Right lobe of liver (tissue), 6 donors: ENCODE measurements at regions of chr9 and their contacts with region 1.

Region 1: GRCh38 chr9:126500684-126501382 is 112.9 kb upstream of the LMX1B start:
- DNase-seq: peak in 2 of 3 donors; percentile 70 to 75
- ATAC-seq: peak; percentile 56 to 70 (median 68)
- H3K4me3 ChIP-seq: no peak overlapping the region
- H3K27ac ChIP-seq: no peak overlapping the region
- H3K4me1 ChIP-seq: peaks cover 0 to 4% (median 0%) of the 10 kb centered on the region in 4 donors
- H3K27me3 ChIP-seq: no peaks in the 10 kb centered on the region
- CTCF ChIP-seq: peak; percentile 81 to 92 (median 89)
- POLR2A ChIP-seq: no peak

Region 2: GRCh38 chr9:126558051-126558665 is 57.3 kb after region 1 on chr9:
- intact Hi-C with region 1: loop called (anchors 5 kb)
- DNase-seq: peak; percentile 55 to 76 (median 73)
- ATAC-seq: peak; percentile 90 to 97 (median 92)
- H3K4me3 ChIP-seq: no peak overlapping the region
- H3K27ac ChIP-seq: no peak overlapping the region
- H3K4me1 ChIP-seq: no peaks in the 10 kb centered on the region
- H3K27me3 ChIP-seq: no peaks in the 10 kb centered on the region
- CTCF ChIP-seq: peak; percentile 76 to 92 (median 86)
- POLR2A ChIP-seq: no peak

Region 3: GRCh38 chr9:126722252-126723078 is 221.6 kb after region 1 on chr9:
- intact Hi-C with region 1: no loop called
- DNase-seq: peak; percentile 63 to 83 (median 80)
- ATAC-seq: peak; percentile 74 to 88 (median 84)
- H3K4me3 ChIP-seq: peak overlapping the region; percentile 41 to 56 (median 48)
- H3K27ac ChIP-seq: peak overlapping the region; percentile 36 to 63 (median 55)
- H3K4me1 ChIP-seq: peaks cover 0 to 6% (median 0%) of the 10 kb centered on the region in 4 donors
- H3K27me3 ChIP-seq: peaks cover 0 to 4% of the 10 kb centered on the region in 2 donors
- CTCF ChIP-seq: no peak
- POLR2A ChIP-seq: no peak

Region 4: DNA sequence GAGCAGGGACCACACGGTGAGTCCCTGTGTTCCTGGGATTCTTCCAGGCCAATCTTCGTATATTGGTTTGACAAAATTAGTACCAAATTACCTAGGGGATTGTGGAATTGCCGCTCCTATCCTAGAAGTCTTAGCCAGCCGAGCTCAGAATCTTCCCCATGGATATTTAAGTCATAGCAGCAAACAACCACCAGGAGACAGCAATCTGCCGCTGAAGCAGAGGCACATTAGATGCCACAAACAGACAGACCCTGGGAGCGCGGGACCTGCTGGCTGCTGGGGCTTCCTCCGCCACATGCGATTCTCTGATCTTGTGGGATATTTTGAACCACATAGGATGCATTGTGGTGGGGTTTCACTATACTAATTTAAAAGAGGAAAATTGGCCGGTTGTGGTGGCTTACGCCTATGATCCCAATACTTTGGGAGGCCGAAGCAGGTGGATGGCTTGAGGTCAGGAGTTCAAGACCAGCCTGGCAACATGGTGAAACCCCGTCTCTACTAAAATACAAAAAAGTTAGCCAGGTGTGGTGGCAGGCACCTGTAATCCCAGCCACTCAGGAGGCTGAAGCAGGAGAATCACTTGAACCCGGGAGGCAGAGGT is 272.3 kb after region 1 on chr9:
- intact Hi-C with region 1: loop called in 1 of 2 experiments (anchors 10 kb)
- DNase-seq: no peak
- ATAC-seq: peak; percentile 40 to 51 (median 46)
- H3K4me3 ChIP-seq: no peak overlapping the region
- H3K27ac ChIP-seq: no peak overlapping the region
- H3K4me1 ChIP-seq: no peaks in the 10 kb centered on the region
- H3K27me3 ChIP-seq: no peaks in the 10 kb centered on the region
- CTCF ChIP-seq: peak; percentile 33 to 45 (median 40)
- POLR2A ChIP-seq: no peak